BJ (cell line): ENCODE measurements at regions of chr9 and their contacts with region 1.

Region 1: DNA sequence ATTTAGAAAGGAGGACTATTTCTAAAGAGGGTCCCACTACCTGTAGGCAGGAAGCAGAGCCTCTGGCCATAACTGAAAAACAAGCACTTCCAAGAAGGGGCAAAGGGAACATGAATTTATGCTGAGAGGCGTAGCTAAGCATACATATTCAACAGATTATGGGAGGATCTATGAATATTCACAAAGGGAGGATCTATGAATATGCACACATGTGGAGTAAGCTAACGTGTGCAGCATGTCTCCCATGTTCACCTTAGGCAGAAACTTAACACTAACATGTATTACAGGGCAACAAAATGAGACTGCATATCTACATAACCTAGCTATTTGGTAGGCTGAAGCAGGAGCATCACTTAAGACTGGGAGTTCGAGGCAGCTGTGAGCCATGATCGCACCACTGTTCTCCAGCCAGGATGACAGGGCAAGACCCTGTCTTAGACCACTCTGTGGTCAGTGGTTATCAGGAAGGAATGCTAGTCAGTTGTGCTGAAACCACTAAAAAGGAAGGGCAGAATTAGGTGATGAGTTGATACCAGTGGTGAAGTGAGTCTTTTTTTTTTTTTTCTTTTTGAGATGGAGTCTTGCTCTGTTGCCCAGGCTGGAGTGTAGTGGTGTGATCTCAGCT is 20.8 kb downstream of the FXN start:
- DNase-seq: no peak
- H3K4me3 ChIP-seq: no peak overlapping the region
- H3K27me3 ChIP-seq: no peaks in the 10 kb centered on the region
- CTCF ChIP-seq: no peak

Region 2: GRCh38 chr9:68869022-68869421 is 187.3 kb before region 1 on chr9:
- CTCF ChIA-PET with region 1: no interaction called
- POLR2A ChIA-PET with region 1: no interaction called
- DNase-seq: no peak
- H3K4me3 ChIP-seq: no peak overlapping the region
- H3K27me3 ChIP-seq: no peaks in the 10 kb centered on the region
- CTCF ChIP-seq: no peak

Region 3: GRCh38 chr9:69023650-69024049 is 32.7 kb before region 1 on chr9:
- CTCF ChIA-PET with region 1: no interaction called
- POLR2A ChIA-PET with region 1: no interaction called
- DNase-seq: no peak
- H3K4me3 ChIP-seq: no peak overlapping the region
- H3K27me3 ChIP-seq: 0 out of 2 replicates have a peak, but pooled peaks cover 2% of the 10 kb centered on the region
- CTCF ChIP-seq: no peak

Region 4: GRCh38 chr9:69044240-69045219 is 11.8 kb before region 1 on chr9:
- CTCF ChIA-PET with region 1: interaction called, 20 read pairs
- POLR2A ChIA-PET with region 1: no interaction called
- DNase-seq: no peak
- H3K4me3 ChIP-seq: no peak overlapping the region
- H3K27me3 ChIP-seq: no peaks in the 10 kb centered on the region
- CTCF ChIP-seq: no peak

Region 5: DNA sequence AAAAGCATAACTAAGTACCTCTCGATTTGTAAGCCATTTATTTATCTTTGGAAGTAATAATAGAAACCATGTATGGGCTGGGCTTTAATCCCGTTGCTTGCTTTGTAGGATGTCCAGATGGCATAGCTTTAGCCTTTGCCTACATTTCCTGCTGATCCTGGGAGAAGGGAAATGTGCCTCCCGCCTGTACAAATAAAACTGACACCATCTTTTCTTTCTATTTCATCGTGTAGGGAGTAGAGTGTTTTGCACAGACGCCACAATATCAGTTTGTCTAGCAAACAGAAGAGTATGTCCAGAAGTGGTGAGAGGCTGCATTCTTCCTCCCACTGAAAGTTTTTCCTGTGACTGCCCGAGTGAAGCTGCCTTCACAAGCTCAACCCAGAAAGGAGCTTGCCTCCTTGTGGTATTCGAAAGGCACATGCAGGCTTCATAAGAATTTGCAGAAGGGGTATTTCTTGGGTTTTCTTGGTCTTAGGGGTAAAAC is 93.1 kb after region 1 on chr9:
- CTCF ChIA-PET with region 1: interaction called, 12 read pairs
- POLR2A ChIA-PET with region 1: no interaction called
- DNase-seq: no peak
- H3K4me3 ChIP-seq: 0 out of 2 replicates have a peak overlapping the region, but pooled peaks have one; percentile 9
- H3K27me3 ChIP-seq: no peaks in the 10 kb centered on the region
- CTCF ChIP-seq: peak; percentile 58

Region 6: GRCh38 chr9:69186841-69187611 is 130.7 kb after region 1 on chr9:
- CTCF ChIA-PET with region 1: interaction called, 297 read pairs
- POLR2A ChIA-PET with region 1: no interaction called
- DNase-seq: no peak
- H3K4me3 ChIP-seq: no peak overlapping the region
- H3K27me3 ChIP-seq: no peaks in the 10 kb centered on the region
- CTCF ChIP-seq: no peak

Region 7: GRCh38 chr9:69667306-69667705 is 611.0 kb after region 1 on chr9:
- CTCF ChIA-PET with region 1: no interaction called
- POLR2A ChIA-PET with region 1: no interaction called
- DNase-seq: no peak
- H3K4me3 ChIP-seq: no peak overlapping the region
- H3K27me3 ChIP-seq: no peaks in the 10 kb centered on the region
- CTCF ChIP-seq: no peak